Cardiac septum (tissue), 1 donor: ENCODE measurements at regions of chr9 and their contacts with region 1.

Region 1: GRCh38 chr9:33404788-33405362 is 2.5 kb upstream of the AQP7 start:
- DNase-seq: no peak

Region 2: DNA sequence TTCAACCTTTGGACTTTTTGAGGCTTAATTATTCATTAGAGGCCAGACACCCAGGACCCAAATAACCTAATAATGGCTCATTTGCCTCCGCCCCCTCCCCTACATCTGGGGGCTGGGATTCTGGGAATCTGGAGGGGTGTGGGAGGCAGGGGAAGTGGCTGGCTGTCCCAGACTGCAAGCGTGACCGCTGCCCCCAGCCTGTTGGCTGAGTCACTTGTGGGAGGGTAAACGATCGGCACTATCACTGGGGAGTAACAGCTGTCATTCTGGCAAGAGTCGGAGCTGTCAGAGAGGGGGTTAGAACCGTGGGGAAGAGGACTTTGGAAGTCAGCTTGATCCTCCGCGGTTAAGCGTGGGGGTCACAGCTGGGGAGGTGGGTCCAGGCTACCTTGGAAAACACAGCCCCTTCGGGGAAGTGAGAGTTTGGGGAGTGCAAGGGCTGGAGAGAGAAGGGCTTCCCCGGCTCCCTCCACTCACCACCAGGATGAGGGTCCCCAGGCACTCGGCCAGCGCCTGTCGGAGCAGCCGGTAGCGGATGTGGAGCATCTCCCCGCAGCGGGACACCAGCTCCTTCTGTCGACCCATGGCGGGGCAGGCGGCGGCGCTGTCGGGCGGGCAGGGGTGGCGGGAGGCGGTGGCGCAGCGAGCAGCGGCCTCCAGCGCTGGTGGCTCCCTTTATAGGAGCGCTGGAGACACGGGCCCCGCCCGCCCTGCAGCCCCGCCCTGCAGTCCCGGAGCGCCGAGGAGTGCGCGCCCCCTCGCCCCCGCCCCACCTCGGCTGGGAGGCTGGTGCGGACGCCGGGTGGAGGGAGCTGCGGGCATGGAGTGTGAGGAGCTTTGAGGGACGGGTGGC is 42.3 kb after region 1 on chr9 and contains the start of gene AQP3:
- intact Hi-C with region 1: loop called (anchors 5 kb)
- DNase-seq: no peak
- total RNA-seq, gene AQP3: 7.7 TPM